ENCODE measurements at regions of chr14 and their contacts with region 1.

Region 1: GRCh38 chr14:67557126-67557525 is 24.0 kb downstream of the PLEKHH1 start:
- DNase-seq: peak; percentile 74
- H3K4me3 ChIP-seq: no peak overlapping the region
- H3K27ac ChIP-seq: peak overlapping the region; percentile 12
- H3K4me1 ChIP-seq: peaks cover 32% of the 10 kb centered on the region
- H3K27me3 ChIP-seq: no peaks in the 10 kb centered on the region
- CTCF ChIP-seq: no peak

Region 2: GRCh38 chr14:67207810-67208209 is 349.3 kb before region 1 on chr14:
- CTCF ChIA-PET with region 1: no interaction called
- dilution Hi-C with region 1: no loop called
- in situ Hi-C with region 1: no loop called
- intact Hi-C with region 1: no loop called
- DNase-seq: no peak
- H3K4me3 ChIP-seq: no peak overlapping the region
- H3K27ac ChIP-seq: no peak overlapping the region
- H3K4me1 ChIP-seq: no peaks in the 10 kb centered on the region
- H3K27me3 ChIP-seq: no peaks in the 10 kb centered on the region
- CTCF ChIP-seq: no peak

Region 3: GRCh38 chr14:67461341-67462098 is 95.6 kb before region 1 on chr14:
- CTCF ChIA-PET with region 1: no interaction called
- dilution Hi-C with region 1: loop called (anchors 5 kb)
- in situ Hi-C with region 1: no loop called
- intact Hi-C with region 1: no loop called
- DNase-seq: peak; percentile 61
- H3K4me3 ChIP-seq: no peak overlapping the region
- H3K27ac ChIP-seq: no peak overlapping the region
- H3K4me1 ChIP-seq: no peaks in the 10 kb centered on the region
- H3K27me3 ChIP-seq: no peaks in the 10 kb centered on the region
- CTCF ChIP-seq: no peak

Region 4: DNA sequence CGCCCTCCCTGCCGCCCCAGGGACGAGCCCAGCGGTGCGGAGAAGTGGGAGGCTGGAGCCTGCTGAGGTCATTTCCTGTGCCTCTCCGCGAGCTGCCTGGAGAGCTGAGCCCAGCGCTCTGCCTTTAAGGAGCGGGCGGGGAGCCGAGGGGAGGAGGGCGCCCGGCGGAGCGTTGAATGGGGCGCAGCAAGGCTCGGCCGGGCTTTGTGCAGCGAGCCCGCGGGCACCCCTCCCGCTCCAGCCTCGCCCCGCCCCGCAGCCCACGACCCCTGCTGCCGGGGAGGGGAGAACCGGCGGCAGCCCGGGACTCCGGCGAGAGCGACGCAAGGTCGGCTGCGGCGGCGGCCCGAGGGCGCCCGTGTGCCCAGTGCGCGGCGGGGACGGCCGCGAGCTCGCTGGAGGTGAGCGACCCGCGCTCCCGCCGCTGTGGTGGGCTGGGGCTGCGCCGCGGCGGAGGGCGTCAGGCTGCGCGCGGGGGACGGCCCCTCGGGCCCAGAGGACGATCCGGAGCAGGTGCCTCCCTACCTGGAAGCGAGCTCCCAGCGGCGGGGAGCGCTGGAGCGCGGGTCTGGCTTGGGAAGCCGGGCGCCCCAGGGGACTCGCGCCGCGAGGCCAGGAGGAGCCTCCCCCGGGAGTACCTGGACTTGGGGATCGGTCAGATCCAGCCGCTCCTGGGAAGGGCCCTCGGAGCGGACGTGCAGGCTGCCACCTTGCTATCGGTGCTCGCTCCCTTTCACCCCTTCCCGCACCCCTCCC is 23.9 kb before region 1 on chr14 and contains the start of gene PLEKHH1:
- CTCF ChIA-PET with region 1: interaction called, 4 read pairs
- dilution Hi-C with region 1: no loop called
- in situ Hi-C with region 1: no loop called
- intact Hi-C with region 1: loop called (anchors 2 kb)
- DNase-seq: peak; percentile 72
- H3K4me3 ChIP-seq: peak within 1 kb of the TSS; percentile 55 to 70 (median 64)
- H3K27ac ChIP-seq: no peak within 1 kb of the TSS
- H3K4me1 ChIP-seq: peaks cover 7% of the 10 kb centered on the region
- H3K27me3 ChIP-seq: no peaks in the 10 kb centered on the region
- CTCF ChIP-seq: no peak
- total RNA-seq, gene PLEKHH1: 6.7 to 11.9 TPM

Region 5: GRCh38 chr14:67599698-67600561 is 42.8 kb after region 1 on chr14 and contains the start of gene PIGH:
- CTCF ChIA-PET with region 1: no interaction called
- dilution Hi-C with region 1: loop called (anchors 5 kb)
- in situ Hi-C with region 1: no loop called
- intact Hi-C with region 1: no loop called
- DNase-seq: peak; percentile 84
- H3K4me3 ChIP-seq: peak within 1 kb of the TSS; percentile 88 to 92 (median 91)
- H3K27ac ChIP-seq: peak within 1 kb of the TSS; percentile 63
- H3K4me1 ChIP-seq: peaks cover 4% of the 10 kb centered on the region
- H3K27me3 ChIP-seq: no peaks in the 10 kb centered on the region
- CTCF ChIP-seq: peak; percentile 13 to 67
- total RNA-seq, gene PIGH: 16.7 to 18.2 TPM